Activated CD8-positive, alpha-beta memory T cell treated with anti-CD3 and anti-CD28 coated beads, Interleukin-2, amount 10 ng/mL, durations not matched to agents 7 days and 5 days (primary cell): ENCODE measurements at regions of chr15 and their contacts with region 1.

Region 1: GRCh38 chr15:40593588-40594428 is at the start of gene KNL1:
- DNase-seq: peak; percentile 94
- ATAC-seq: peak; percentile 89
- H3K4me3 Mint-ChIP-seq: peak within 1 kb of the TSS; percentile 93
- H3K27ac Mint-ChIP-seq: peak within 1 kb of the TSS; percentile 99
- H3K4me1 Mint-ChIP-seq: peaks cover 45% of the 10 kb centered on the region
- H3K27me3 Mint-ChIP-seq: peaks cover 2% of the 10 kb centered on the region
- total RNA-seq, gene KNL1: 52.1 to 75.0 TPM

Region 2: GRCh38 chr15:40511472-40512133 is 82.2 kb before region 1 on chr15:
- CTCF ChIA-PET with region 1: no interaction called
- DNase-seq: no peak
- ATAC-seq: peak; percentile 67
- H3K4me3 Mint-ChIP-seq: peak overlapping the region; percentile 62
- H3K27ac Mint-ChIP-seq: no peak overlapping the region
- H3K4me1 Mint-ChIP-seq: peaks cover 25% of the 10 kb centered on the region
- H3K27me3 Mint-ChIP-seq: peaks cover 74% of the 10 kb centered on the region

Region 3: GRCh38 chr15:40564591-40565332 is 29.0 kb before region 1 on chr15 and contains the start of gene CCDC32:
- CTCF ChIA-PET with region 1: interaction called, 27 read pairs
- DNase-seq: peak; percentile 99
- ATAC-seq: peak; percentile 95
- H3K4me3 Mint-ChIP-seq: peak within 1 kb of the TSS; percentile 91
- H3K27ac Mint-ChIP-seq: peak within 1 kb of the TSS; percentile 94
- H3K4me1 Mint-ChIP-seq: peaks cover 52% of the 10 kb centered on the region
- H3K27me3 Mint-ChIP-seq: no peaks in the 10 kb centered on the region
- total RNA-seq, gene CCDC32: 24.4 to 27.8 TPM

Region 4: DNA sequence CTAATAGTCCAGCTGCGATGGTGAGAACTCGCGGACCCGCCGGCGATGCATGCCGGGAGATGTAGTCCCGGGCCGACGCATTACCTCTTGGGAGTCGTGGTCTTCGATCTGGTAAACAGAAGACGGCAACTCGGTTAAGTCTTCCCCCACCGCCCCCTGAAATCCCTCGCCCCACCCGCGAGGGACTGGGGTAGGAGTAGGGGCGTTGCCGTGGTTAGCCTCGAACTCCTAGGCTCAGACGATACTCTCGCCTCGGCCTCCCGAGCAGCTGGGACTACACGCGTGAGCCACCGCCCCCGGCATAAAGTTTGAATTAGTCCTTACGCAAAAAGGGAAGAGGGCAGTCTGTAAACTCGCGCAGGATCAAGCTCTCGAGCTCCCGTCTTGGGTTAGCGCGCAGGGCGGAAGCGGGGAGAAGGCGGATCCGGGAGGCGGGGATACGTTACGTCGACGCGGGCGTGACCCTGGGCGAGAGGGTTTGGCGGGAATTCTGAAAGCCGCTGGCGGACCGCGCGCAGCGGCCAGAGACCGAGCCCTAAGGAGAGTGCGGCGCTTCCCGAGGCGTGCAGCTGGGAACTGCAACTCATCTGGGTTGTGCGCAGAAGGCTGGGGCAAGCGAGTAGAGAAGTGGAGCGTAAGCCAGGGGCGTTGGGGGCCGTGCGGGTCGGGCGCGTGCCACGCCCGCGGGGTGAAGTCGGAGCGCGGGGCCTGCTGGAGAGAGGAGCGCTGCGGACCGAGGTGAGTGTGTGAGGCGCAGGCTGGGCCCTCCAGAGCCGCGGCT is 101.1 kb after region 1 on chr15 and contains the start of gene RAD51:
- CTCF ChIA-PET with region 1: interaction called, 15 read pairs
- DNase-seq: peak; percentile 95
- ATAC-seq: peak; percentile 94
- H3K4me3 Mint-ChIP-seq: peak within 1 kb of the TSS; percentile 98
- H3K27ac Mint-ChIP-seq: peak within 1 kb of the TSS; percentile 100
- H3K4me1 Mint-ChIP-seq: peaks cover 41% of the 10 kb centered on the region
- H3K27me3 Mint-ChIP-seq: no peaks in the 10 kb centered on the region
- total RNA-seq, gene RAD51: 73.0 to 83.3 TPM